ENCODE measurements at regions of chr10 and their contacts with region 1.

Region 1: GRCh38 chr10:59580026-59580863 is 129.4 kb downstream of the SLC16A9 start:
- DNase-seq: no peak
- H3K4me3 ChIP-seq: no peak overlapping the region
- H3K27ac ChIP-seq: peak overlapping the region in 1 of 4 donors; percentile 16
- H3K4me1 ChIP-seq: peaks cover 0 to 67% (median 25%) of the 10 kb centered on the region in 4 donors
- H3K27me3 ChIP-seq: no peaks in the 10 kb centered on the region
- CTCF ChIP-seq: peak in 3 of 4 experiments; percentile 26 to 50 (median 42)
- EP300 ChIP-seq: no peak
- POLR2A ChIP-seq: no peak

Region 2: GRCh38 chr10:59227136-59227673 is 353.0 kb before region 1 on chr10:
- intact Hi-C with region 1: no loop called
- DNase-seq: no peak
- H3K4me3 ChIP-seq: no peak overlapping the region
- H3K27ac ChIP-seq: no peak overlapping the region
- H3K4me1 ChIP-seq: peaks cover 0 to 10% (median 0%) of the 10 kb centered on the region in 4 donors
- H3K27me3 ChIP-seq: no peaks in the 10 kb centered on the region
- CTCF ChIP-seq: no peak
- EP300 ChIP-seq: no peak
- POLR2A ChIP-seq: no peak

Region 3: DNA sequence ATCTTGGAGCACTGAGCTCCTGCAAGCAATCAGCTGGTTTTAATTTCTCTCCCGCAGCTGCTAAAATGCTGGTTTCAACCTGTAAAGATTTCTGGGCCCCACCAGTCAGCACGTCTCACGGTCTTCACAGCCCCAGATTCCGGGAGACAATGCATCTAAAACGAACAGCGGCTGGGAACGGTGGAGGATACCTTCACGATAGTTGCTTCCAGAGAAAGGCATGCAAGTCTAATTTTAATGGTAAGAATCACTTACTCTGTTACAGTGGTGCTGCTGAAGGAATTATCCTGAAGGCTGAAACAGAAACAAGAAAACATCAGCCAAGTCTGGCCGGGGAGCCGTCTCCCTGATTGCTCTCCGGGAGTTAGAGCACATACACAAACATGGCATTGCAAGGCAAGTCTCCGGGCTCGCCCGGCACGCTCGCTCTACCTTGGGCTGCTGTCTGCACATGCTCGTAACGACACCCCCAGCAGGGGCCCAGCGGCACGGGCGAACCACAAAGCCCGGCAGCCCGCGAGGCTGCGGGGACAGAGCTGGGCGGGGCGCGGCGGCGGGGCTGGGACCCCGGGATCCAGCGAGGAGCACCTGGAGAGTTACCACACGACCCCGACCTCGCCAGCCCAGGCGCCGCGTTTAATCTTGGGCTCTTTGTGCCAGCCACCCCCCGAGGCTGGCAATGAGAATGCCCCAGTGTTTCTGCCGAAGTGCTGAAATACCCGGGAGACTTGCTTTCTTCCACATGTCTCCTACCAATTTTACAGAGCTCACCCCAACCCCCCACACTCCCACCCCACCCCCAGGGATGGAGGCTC is 217.9 kb before region 1 on chr10 and contains the start of gene FAM13C:
- intact Hi-C with region 1: loop called (anchors 5 kb)
- DNase-seq: peak; percentile 86
- H3K4me3 ChIP-seq: peak within 1 kb of the TSS; percentile 58 to 70 (median 66)
- H3K27ac ChIP-seq: peak within 1 kb of the TSS; percentile 85 to 90 (median 87)
- H3K4me1 ChIP-seq: peaks cover 0 to 48% (median 31%) of the 10 kb centered on the region in 4 donors
- H3K27me3 ChIP-seq: no peaks in the 10 kb centered on the region
- CTCF ChIP-seq: peak in 1 of 4 experiments; percentile 16
- EP300 ChIP-seq: no peak
- POLR2A ChIP-seq: no peak
- total RNA-seq, gene FAM13C: 13.8 to 33.9 (median 22.7) TPM

Measured in sigmoid colon (tissue), 7 donors.